Activated CD4-positive, alpha-beta T cell treated with anti-CD3 and anti-CD28 coated beads for 36 hours (primary cell): ENCODE measurements at regions of chr12 and their contacts with region 1.

Region 1: DNA sequence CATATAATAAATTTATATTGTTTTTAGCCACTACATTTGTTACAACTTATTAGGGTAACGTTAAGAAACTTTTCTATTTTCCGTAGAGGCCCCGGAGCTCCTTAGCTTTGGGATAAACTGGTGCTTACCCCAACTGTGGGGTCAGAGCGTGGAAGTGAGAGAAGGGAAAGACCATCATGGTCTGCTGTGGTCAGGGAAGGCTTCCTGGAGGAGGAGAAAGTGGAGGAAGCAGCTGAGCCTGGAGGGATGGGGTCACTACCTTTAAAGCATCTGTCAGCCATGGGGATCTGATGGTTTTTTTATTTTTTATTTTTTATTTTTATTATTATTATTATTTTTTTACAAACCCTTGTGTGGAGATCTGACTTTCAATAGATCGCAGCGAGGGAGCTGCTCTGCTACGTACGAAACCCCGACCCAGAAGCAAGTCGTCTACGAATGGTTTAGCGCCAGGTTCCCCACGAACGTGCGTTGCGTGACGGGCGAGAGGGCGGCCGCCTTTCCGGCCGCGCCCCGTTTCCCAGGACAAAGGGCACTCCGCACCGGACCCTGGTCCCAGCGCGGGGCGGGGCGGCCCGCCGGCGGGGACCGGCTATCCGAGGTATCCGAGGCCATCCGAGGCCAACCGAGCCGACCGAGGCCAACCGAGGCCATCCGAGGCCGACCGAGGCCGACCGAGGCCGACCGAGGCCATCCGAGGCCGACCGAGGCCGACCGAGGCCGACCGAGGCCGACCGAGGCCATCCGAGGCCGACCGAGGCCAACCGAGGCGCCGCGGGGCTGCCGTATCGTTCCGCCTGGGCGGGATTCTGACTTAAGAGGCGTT is 1101.2 kb upstream of the TMEM132C start:
- DNase-seq: peak; percentile 85
- ATAC-seq: peak; percentile 91
- H3K4me3 Mint-ChIP-seq: peak overlapping the region; percentile 64
- H3K27ac Mint-ChIP-seq: peak overlapping the region; percentile 72
- H3K4me1 Mint-ChIP-seq: peaks cover 19% of the 10 kb centered on the region
- H3K27me3 Mint-ChIP-seq: peaks cover 9% of the 10 kb centered on the region

Region 2: GRCh38 chr12:126567051-126567450 is 598.7 kb before region 1 on chr12:
- CTCF ChIA-PET with region 1: no interaction called
- POLR2A ChIA-PET with region 1: no interaction called
- intact Hi-C with region 1: no loop called
- DNase-seq: no peak
- ATAC-seq: no peak
- H3K4me3 Mint-ChIP-seq: no peak overlapping the region
- H3K27ac Mint-ChIP-seq: no peak overlapping the region
- H3K4me1 Mint-ChIP-seq: peaks cover 3% of the 10 kb centered on the region
- H3K27me3 Mint-ChIP-seq: no peaks in the 10 kb centered on the region

Region 3: GRCh38 chr12:126936181-126936851 is 229.5 kb before region 1 on chr12:
- CTCF ChIA-PET with region 1: no interaction called
- POLR2A ChIA-PET with region 1: no interaction called
- intact Hi-C with region 1: no loop called
- DNase-seq: peak; percentile 13
- ATAC-seq: no peak
- H3K4me3 Mint-ChIP-seq: no peak overlapping the region
- H3K27ac Mint-ChIP-seq: no peak overlapping the region
- H3K4me1 Mint-ChIP-seq: no peaks in the 10 kb centered on the region
- H3K27me3 Mint-ChIP-seq: no peaks in the 10 kb centered on the region

Region 4: GRCh38 chr12:127083008-127083949 is 82.5 kb before region 1 on chr12:
- CTCF ChIA-PET with region 1: no interaction called
- POLR2A ChIA-PET with region 1: no interaction called
- intact Hi-C with region 1: loop called in 1 of 2 experiments (anchors 5 kb)
- DNase-seq: peak; percentile 11
- ATAC-seq: peak; percentile 95
- H3K4me3 Mint-ChIP-seq: no peak overlapping the region
- H3K27ac Mint-ChIP-seq: peak overlapping the region; percentile 53
- H3K4me1 Mint-ChIP-seq: peaks cover 8% of the 10 kb centered on the region
- H3K27me3 Mint-ChIP-seq: peaks cover 2% of the 10 kb centered on the region

Region 5: GRCh38 chr12:127145929-127146789 is 19.6 kb before region 1 on chr12:
- CTCF ChIA-PET with region 1: no interaction called
- POLR2A ChIA-PET with region 1: no interaction called
- intact Hi-C with region 1: loop called in 1 of 2 experiments (anchors 1 kb)
- DNase-seq: peak; percentile 86
- ATAC-seq: peak; percentile 96
- H3K4me3 Mint-ChIP-seq: peak overlapping the region; percentile 78
- H3K27ac Mint-ChIP-seq: peak overlapping the region; percentile 81
- H3K4me1 Mint-ChIP-seq: peaks cover 5% of the 10 kb centered on the region
- H3K27me3 Mint-ChIP-seq: no peaks in the 10 kb centered on the region

Region 6: GRCh38 chr12:127559349-127560040 is 393.7 kb after region 1 on chr12:
- CTCF ChIA-PET with region 1: no interaction called
- POLR2A ChIA-PET with region 1: no interaction called
- intact Hi-C with region 1: loop called in 1 of 2 experiments (anchors 5 kb)
- DNase-seq: peak; percentile 91
- ATAC-seq: peak; percentile 95
- H3K4me3 Mint-ChIP-seq: no peak overlapping the region
- H3K27ac Mint-ChIP-seq: peak overlapping the region; percentile 85
- H3K4me1 Mint-ChIP-seq: peaks cover 21% of the 10 kb centered on the region
- H3K27me3 Mint-ChIP-seq: no peaks in the 10 kb centered on the region